Motor neuron (in vitro differentiated cells): ENCODE measurements at regions of chr11 and their contacts with region 1.

Region 1: GRCh38 chr11:44538375-44539054 is 26.9 kb upstream of the CD82 start:
- ATAC-seq: peak; percentile 40 to 98 (median 96)
- H3K4me3 ChIP-seq: no peak overlapping the region
- H3K27ac ChIP-seq: no peak overlapping the region
- H3K4me1 ChIP-seq: peaks cover 0 to 3% of the 10 kb centered on the region in 2 donors

Region 2: GRCh38 chr11:44095506-44096394 is 442.8 kb before region 1 on chr11 and contains the start of gene EXT2:
- in situ Hi-C with region 1: loop called in 4 of 9 experiments (anchors 25 kb)
- ATAC-seq: peak; percentile 87 to 97 (median 94)
- H3K4me3 ChIP-seq: peak within 1 kb of the TSS; percentile 74 to 99 (median 95)
- H3K27ac ChIP-seq: peak within 1 kb of the TSS; percentile 72 to 79
- H3K4me1 ChIP-seq: peaks cover 4 to 5% of the 10 kb centered on the region in 2 donors
- total RNA-seq, gene EXT2: 29.3 to 96.9 (median 48.8) TPM

Region 3: DNA sequence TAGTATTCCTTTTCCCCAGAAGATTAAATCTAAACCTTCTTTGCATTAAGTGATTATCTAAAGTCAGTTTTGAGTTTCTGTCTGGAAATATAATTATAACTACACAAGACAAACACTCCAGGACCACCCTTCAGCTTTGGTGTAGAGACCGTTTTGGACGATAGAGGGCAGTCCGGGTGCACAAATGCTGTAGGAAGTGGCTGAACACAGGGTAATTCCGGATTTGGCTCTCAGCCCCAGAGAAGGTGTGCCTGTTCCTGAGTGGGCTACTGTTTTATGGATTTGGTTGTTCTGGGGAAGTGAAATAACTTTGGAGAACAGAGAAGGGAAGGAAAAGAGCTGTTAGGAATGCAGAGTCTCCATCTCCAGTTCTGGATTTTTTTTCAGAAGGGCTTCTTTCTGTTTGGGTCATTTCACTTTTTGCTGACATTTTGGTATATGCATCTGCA is 428.3 kb before region 1 on chr11:
- in situ Hi-C with region 1: loop called in 2 of 9 experiments (anchors 25 kb)
- ATAC-seq: peak; percentile 55 to 90 (median 72)
- H3K4me3 ChIP-seq: no peak overlapping the region
- H3K27ac ChIP-seq: no peak overlapping the region
- H3K4me1 ChIP-seq: no peaks in the 10 kb centered on the region

Region 4: GRCh38 chr11:44133335-44133946 is 405.1 kb before region 1 on chr11:
- in situ Hi-C with region 1: loop called in 5 of 9 experiments (anchors 25 kb)
- ATAC-seq: peak in 4 of 8 experiments; percentile 41 to 62 (median 57)
- H3K4me3 ChIP-seq: no peak overlapping the region
- H3K27ac ChIP-seq: no peak overlapping the region
- H3K4me1 ChIP-seq: no peaks in the 10 kb centered on the region

Region 5: DNA sequence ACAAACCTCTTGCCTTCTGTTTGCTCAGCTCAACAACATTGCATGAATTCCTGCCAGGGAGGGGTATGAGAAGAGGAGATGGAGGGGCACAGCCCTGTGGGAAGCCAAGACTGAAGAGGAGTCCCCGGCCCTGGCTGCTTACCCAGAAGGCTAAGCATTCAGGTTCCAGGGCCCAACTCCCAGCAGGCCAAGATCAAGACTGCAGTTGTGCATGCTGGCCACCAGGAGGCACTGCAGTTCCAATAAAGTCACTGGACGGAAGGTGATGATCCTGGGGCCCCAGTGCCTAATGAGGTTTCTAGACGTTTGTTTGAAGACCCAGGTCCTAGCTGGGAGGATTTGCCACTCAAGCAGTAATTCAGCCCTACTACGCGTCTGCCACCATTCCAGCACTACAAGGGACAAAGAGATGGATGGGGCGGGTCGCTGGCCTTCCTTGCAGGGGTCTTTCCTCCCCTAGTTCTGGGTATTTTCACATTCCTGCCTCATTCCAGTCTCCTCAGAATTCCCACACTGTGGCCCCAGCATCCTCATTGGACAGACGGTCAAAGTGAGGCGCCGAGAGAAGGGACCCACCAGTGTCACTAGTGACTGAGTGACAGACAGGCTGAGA is 252.1 kb before region 1 on chr11:
- in situ Hi-C with region 1: loop called in 8 of 9 experiments (anchors 10 to 25 kb)
- ATAC-seq: peak in 7 of 8 experiments; percentile 25 to 63 (median 47)
- H3K4me3 ChIP-seq: no peak overlapping the region
- H3K27ac ChIP-seq: no peak overlapping the region
- H3K4me1 ChIP-seq: peaks cover 0 to 6% of the 10 kb centered on the region in 2 donors